Naive thymus-derived CD4-positive, alpha-beta T cell (primary cell): ENCODE measurements at regions of chr6 and their contacts with region 1.

Region 1: DNA sequence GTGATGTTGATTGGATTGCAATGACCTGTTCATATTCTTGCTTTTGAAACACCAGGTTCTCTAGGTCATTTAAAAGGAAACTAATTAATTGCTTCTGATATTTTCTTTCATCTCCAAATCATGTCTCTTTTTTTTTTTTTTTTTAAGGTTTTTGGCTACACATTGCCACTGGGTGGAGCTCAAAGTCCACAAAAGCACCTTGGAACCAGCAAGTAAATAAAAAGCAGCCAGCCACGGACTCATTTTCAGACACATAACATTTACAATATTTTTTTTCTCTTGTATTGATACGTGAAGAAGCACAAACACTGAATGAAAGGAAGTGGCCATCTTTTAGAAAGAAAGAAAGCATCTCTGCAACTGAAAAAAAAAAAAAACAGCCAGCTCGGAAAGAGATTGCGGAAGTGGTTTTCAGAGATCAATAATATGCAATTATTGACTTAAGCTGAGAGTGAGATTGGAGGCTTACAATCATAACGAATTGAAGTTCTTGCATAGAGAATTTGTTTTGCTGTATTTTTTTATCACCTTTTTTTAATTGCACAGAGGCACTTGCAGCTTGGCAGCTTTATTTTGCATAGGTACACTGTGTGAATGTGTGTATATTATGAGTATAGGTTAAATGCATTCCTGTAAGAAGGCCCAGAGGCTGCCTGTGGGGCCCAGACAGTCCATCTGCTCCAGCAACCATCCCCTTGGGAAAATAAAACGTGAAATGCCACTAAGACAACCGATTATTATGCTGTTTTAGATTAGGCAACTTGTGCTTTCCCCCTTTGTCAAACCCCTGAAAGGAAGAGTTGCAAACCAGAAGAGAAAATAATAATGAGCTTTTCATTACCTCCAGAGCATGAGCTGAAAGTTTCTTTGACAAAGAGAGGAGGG is 28.2 kb downstream of the CGA start:
- DNase-seq: peak in 5 of 9 donors; percentile 7 to 39 (median 16)
- ATAC-seq: no peak
- H3K4me3 ChIP-seq: no peak overlapping the region
- H3K4me3 Mint-ChIP-seq: peak overlapping the region in 2 of 10 donors; percentile 17 to 20
- H3K27ac ChIP-seq: no peak overlapping the region
- H3K27ac Mint-ChIP-seq: no peak overlapping the region
- H3K4me1 ChIP-seq: no peaks in the 10 kb centered on the region
- H3K4me1 Mint-ChIP-seq: peaks cover 0 to 6% (median 0%) of the 10 kb centered on the region in 7 donors
- H3K27me3 ChIP-seq: peaks cover 0 to 5% of the 10 kb centered on the region in 2 donors
- H3K27me3 Mint-ChIP-seq: peaks cover 11 to 38% (median 18%) of the 10 kb centered on the region in 5 donors

Region 2: DNA sequence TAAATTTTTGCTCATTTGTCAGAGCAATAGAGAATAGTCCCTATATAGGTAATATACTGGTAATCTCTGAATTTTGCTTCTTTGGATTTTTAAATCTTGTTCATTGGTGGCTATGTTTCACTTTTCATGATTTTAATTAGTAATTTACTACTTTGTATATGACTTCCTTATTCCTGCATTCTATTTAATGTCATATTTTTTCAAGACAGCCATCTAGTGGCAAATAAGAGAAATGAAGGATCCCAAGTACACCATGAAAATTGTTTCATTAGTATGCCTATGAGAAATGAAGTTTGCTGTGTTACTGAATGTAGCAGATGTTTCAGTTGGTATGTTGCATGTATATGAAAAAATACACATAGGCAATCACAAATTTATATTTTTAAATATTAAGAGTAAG is 171.1 kb after region 1 on chr6:
- CTCF ChIA-PET with region 1: no interaction called
- POLR2A ChIA-PET with region 1: no interaction called
- intact Hi-C with region 1: loop called in 1 of 2 experiments (anchors 2 kb)
- DNase-seq: peak in 4 of 9 donors; percentile 6 to 23 (median 18)
- ATAC-seq: peak; percentile 66
- H3K4me3 ChIP-seq: no peak overlapping the region
- H3K4me3 Mint-ChIP-seq: no peak overlapping the region
- H3K27ac ChIP-seq: no peak overlapping the region
- H3K27ac Mint-ChIP-seq: no peak overlapping the region
- H3K4me1 ChIP-seq: no peaks in the 10 kb centered on the region
- H3K4me1 Mint-ChIP-seq: peaks cover 0 to 7% (median 3%) of the 10 kb centered on the region in 7 donors
- H3K27me3 ChIP-seq: no peaks in the 10 kb centered on the region
- H3K27me3 Mint-ChIP-seq: no peaks in the 10 kb centered on the region